Mucosa of descending colon (tissue), 3 donors: ENCODE measurements at regions of chr6 and their contacts with region 1.

Region 1: GRCh38 chr6:75208298-75209183 is 2.7 kb upstream of the COL12A1 start:
- DNase-seq: peak; percentile 78 to 90 (median 86)
- ATAC-seq: peak; percentile 77
- H3K4me3 ChIP-seq: no peak overlapping the region
- H3K4me1 ChIP-seq: peaks cover 27% of the 10 kb centered on the region
- CTCF ChIP-seq: peak; percentile 76

Region 2: DNA sequence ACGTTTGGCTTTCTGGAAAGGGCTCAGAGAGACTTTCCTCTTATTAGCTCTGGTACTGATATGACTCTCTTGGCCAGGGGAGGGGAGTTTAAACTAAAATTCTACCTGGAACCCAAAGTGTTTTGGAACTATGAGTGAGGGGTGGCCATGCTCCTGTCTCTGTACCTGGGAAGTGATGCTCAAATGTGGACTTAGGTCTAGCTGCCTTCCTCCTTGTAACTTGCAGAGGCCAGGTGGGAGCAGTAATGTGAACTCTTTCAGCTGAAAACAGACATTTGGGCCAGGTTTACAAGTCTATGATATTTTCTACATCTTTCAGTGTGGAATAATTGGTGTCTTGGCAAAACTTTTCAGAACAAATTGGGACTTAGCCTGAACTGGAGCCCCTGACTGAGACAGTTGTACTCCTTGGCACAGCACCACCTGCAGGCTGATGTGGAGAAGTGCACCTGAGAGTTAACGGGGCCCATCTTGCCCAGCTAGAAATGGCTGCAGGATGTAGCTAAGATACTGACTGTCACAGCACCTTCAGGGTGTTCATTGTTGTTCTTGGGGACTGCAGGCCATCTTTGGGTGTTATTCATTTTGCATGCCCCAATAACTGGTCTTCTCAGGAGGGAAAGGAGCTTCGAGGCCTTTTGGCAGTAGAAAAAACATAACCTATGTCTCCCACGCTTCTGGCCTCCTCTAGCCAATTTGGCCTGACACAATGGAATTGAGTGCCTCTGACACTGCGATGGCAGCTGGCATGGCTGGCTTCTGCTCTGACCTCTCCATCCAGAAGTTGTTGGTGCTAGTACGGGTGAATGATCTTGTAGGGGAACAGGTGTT is 1475.5 kb before region 1 on chr6:
- intact Hi-C with region 1: loop called in 1 of 2 experiments (anchors 10 kb)
- DNase-seq: peak in 2 of 3 donors; percentile 55 to 61
- ATAC-seq: peak; percentile 93
- H3K4me3 ChIP-seq: no peak overlapping the region
- H3K4me1 ChIP-seq: no peaks in the 10 kb centered on the region
- CTCF ChIP-seq: peak; percentile 83

Region 3: DNA sequence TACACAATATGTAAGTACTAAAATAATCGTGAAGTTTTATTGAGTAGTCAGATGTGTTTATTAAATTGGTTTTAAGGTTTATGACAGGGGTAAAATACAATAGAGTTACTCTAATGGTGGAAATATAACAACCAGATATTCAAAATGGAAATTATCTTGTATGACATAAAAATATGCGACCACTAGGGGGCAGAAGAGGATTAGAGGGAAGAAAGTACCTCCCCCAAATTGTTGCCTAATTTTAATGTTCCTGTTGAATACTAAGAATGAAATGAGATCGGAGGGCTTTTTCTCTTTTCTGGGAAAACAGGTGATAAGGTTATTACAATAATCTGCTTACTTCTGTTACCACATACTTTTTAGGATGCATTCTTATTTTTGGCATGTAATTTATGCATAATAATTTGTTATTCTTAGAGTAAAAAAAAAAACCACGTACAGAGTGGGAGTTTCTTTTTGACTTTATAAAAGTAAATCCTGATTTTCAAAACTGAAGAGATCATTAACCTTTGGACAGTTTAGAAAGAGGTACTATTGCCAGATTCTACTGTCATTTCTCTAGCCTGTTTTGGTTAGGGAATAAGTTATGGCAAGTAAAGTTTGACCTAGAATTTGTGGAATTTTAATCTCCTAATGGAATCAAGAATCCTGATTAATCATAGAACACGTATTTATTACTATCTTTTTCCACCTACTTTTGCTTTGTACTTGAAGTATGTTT is 1353.4 kb before region 1 on chr6:
- intact Hi-C with region 1: loop called in 1 of 2 experiments (anchors 10 kb)
- DNase-seq: peak in 1 of 3 donors; percentile 49
- ATAC-seq: no peak
- H3K4me3 ChIP-seq: no peak overlapping the region
- H3K4me1 ChIP-seq: no peaks in the 10 kb centered on the region
- CTCF ChIP-seq: no peak

Region 4: DNA sequence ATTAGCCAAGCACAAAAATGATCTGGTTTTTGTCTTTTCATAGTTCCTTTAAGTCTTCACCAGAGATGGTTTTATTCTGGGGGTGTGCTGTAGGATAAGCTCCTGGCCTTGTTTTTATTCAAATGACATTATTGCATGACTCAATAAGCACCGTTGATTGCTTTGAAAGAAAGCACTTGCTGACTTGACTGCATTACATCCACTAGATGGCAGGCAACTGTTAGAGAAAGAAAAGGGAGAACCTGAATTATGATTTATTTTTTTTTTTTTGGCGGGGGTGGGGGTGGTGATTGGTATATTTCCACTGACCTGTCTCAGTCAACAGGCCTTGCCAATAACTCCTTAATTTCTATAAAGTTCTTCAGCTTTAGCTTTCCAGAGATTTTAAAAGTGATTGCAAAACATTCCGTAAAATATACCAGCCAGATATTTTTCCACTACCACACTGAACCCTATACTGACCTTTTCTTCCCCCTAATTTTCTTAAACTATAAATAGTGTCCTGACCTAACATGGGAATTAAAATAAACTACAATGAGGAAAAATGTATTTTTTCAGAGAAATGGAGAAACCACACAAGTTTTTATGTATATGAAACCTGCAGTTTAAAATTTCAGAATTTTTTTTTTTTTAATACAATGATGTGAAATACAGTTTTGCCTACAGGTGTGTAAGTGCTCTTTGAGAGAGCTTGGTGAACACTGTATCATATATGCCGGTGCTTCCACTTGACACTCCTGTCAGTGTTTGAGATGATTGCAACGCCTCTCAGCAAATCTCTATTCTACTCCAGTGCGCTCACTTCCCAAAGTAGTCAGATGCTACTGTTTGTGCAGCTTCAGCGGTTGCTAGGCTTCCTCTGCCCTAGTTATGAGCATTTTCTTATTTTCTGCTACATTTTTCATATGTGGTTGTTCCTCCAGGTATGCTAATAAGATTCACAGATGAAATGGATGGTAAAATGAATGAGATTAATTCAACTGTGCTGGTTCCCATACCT is 1238.3 kb before region 1 on chr6:
- intact Hi-C with region 1: loop called in 1 of 2 experiments (anchors 10 kb)
- DNase-seq: peak in 1 of 3 donors; percentile 3
- ATAC-seq: no peak
- H3K4me3 ChIP-seq: no peak overlapping the region
- H3K4me1 ChIP-seq: no peaks in the 10 kb centered on the region
- CTCF ChIP-seq: no peak

Region 5: DNA sequence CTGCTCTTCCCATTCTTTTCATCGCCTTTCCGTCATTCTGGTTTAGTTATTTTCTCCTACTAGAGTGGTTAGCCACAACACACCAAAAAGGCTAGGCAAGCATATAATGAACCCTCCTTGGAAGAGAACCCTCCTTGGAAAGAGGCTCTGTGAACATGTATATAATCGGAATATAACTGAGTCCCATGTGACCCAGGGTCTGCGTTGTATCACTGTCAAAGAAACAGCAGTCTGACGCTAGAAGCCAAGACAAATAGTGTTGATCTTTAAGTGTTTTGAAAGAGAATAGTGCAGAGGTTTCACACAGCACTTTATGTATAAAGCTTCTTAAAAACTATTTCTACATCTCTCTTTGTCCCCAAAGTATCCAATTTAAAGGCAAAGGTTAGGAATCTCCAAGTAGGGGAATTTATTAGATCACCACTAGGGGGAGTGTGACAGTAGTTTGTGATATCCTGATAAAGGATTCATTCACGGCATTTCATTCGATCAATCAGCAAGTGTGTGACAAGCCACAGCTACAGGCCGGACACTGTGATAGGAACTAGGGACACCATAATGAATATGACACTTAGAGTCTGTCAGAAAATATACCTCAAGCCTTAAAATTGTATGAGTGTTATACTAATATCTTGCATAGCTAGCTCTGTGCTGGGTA is 1117.3 kb before region 1 on chr6:
- intact Hi-C with region 1: loop called (anchors 5 to 10 kb)
- DNase-seq: no peak
- ATAC-seq: no peak
- H3K4me3 ChIP-seq: no peak overlapping the region
- H3K4me1 ChIP-seq: no peaks in the 10 kb centered on the region
- CTCF ChIP-seq: peak; percentile 36

Region 6: GRCh38 chr6:75386053-75386770 is 177.7 kb after region 1 on chr6:
- intact Hi-C with region 1: no loop called
- DNase-seq: no peak
- ATAC-seq: no peak
- H3K4me3 ChIP-seq: no peak overlapping the region
- H3K4me1 ChIP-seq: no peaks in the 10 kb centered on the region
- CTCF ChIP-seq: no peak